Activated naive CD4-positive, alpha-beta T cell treated with anti-CD3 and anti-CD28 coated beads for 36 hours (primary cell): ENCODE measurements at regions of chr11 and their contacts with region 1.

Region 1: GRCh38 chr11:62556108-62556871 is 9.7 kb upstream of the AHNAK start:
- DNase-seq: peak; percentile 93
- H3K4me3 Mint-ChIP-seq: peak overlapping the region; percentile 41
- H3K27ac Mint-ChIP-seq: peak overlapping the region; percentile 96
- H3K4me1 Mint-ChIP-seq: peaks cover 95% of the 10 kb centered on the region
- H3K27me3 Mint-ChIP-seq: no peaks in the 10 kb centered on the region

Region 2: DNA sequence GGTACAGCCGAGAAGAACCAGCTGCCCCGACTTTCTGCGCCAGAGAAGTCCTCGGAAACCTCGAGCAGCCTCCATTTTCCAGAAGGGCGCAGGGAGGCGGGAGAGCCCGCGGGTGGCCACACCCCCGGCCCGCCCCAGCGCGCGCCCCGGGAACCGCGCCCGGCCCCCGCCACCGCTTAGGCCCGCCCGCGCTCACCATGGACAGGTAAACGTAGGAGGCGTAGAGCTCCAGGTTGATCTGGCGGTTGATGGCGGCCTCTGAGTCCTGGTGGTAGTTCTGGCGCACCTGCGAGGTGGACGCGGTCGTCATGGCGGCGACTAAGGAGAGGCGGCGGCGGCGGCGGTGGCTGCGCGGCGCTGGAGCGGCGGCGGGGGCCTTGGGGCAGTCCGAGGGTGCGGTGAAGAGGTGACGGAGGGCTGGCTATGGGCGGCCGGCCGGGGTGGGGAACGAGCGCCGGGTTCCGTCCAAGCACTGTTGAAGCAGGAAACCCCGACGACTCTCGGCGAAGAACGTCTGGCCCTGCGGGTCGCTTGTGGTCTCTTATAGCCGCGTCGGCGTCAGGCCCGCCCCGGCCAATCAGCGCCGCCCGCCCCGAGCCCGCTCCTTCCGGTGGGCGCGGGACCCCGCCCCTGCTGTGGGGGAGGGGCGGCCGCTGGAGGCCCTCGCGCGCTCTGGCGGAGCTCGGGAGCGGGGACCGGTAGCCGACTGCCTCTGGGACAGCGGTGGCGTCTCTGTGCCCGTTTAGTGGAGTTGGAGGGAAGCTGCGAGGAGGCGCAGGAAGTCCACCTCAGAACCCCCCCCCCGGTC is 589.0 kb before region 1 on chr11 and contains the start of gene FTH1:
- CTCF ChIA-PET with region 1: no interaction called
- intact Hi-C with region 1: loop called (anchors 5 kb)
- DNase-seq: peak; percentile 85
- H3K4me3 Mint-ChIP-seq: peak within 1 kb of the TSS; percentile 93
- H3K27ac Mint-ChIP-seq: peak within 1 kb of the TSS; percentile 94
- H3K4me1 Mint-ChIP-seq: peaks cover 67% of the 10 kb centered on the region
- H3K27me3 Mint-ChIP-seq: no peaks in the 10 kb centered on the region
- total RNA-seq, gene FTH1: 1,302 to 1,352 TPM

Region 3: DNA sequence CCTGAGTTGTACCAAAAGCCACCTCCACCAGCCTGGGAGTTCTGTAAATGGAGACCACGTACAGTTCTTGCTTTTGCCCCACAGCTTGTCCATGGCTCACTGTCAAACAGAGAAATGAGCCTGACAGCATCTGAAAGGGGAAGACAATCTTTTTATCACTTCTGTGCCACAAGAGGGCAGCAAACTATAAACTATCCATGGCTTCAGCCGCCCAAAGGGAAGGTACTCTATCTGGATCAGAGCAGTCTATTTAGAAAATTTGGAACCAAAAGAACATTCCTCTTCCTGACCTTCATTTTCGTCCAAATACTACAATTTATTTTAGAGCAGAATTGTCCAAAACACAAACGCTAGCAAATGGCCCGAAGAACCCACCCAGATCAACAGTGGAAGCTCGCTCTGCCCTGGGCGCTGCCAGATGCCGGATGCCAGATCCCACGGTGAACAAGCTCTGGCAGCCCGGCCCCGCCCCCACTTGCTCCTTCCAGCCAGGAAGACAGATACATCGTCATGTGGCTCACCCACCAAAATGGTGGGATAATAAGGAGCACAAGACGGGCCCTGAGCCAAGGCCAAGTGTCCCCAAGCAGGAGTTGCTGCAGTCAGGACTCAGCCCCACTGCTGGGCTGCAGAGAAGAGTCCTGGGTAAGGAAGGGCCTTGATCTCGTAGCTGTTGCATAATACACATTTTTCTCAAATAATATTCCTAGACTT is 161.3 kb before region 1 on chr11:
- CTCF ChIA-PET with region 1: interaction called, 11 read pairs
- intact Hi-C with region 1: no loop called
- DNase-seq: peak; percentile 67
- H3K4me3 Mint-ChIP-seq: no peak overlapping the region
- H3K27ac Mint-ChIP-seq: no peak overlapping the region
- H3K4me1 Mint-ChIP-seq: peaks cover 17% of the 10 kb centered on the region
- H3K27me3 Mint-ChIP-seq: no peaks in the 10 kb centered on the region

Region 4: DNA sequence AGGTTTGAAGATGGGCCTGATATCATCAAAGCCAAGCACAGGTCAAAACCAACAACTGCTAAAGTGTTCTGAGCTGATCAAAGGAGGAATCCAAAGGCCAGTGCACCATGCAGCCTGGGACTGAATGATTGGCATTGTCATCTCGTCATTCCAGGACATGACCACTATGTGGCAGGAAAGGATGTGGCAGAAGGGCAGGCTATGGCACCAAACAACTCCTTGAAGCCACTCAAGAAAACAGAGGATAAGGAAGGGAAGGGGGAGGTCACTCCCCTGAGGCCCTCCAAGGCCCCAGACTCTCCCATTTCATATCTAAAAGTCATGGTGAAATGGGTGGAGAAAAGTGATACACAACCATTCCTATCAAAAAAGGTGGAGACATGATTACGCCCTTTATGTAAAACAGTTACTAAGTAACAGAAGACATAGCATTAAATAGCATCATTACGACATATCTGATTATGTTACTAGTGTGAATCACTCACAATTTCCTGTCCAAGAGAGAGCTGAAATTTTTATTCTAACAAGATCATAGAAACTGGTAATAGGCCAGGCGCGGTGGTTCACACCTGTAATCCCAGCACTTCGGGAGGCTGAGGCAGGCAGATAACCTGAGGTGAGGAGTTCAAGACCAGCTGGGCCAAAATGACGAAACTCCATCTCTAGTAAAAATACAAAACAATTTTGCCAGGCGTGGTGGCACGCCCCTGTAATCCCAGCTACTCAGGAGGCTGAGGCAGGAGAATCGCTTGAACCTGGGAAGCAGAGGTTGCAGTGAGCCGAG is 59.0 kb before region 1 on chr11:
- CTCF ChIA-PET with region 1: interaction called, 4 read pairs
- intact Hi-C with region 1: loop called (anchors 1 kb)
- DNase-seq: peak; percentile 48
- H3K4me3 Mint-ChIP-seq: no peak overlapping the region
- H3K27ac Mint-ChIP-seq: no peak overlapping the region
- H3K4me1 Mint-ChIP-seq: no peaks in the 10 kb centered on the region
- H3K27me3 Mint-ChIP-seq: peaks cover 10% of the 10 kb centered on the region

Region 5: GRCh38 chr11:62567018-62567633 is 10.8 kb after region 1 on chr11:
- CTCF ChIA-PET with region 1: interaction called, 12 read pairs
- intact Hi-C with region 1: no loop called
- DNase-seq: no peak
- H3K4me3 Mint-ChIP-seq: no peak overlapping the region
- H3K27ac Mint-ChIP-seq: peak overlapping the region; percentile 67
- H3K4me1 Mint-ChIP-seq: peaks cover 59% of the 10 kb centered on the region
- H3K27me3 Mint-ChIP-seq: no peaks in the 10 kb centered on the region

Region 6: GRCh38 chr11:62601394-62602140 is 45.3 kb after region 1 on chr11 and contains the start of gene MTA2:
- CTCF ChIA-PET with region 1: interaction called, 4 read pairs
- intact Hi-C with region 1: loop called (anchors 2 kb)
- DNase-seq: peak; percentile 99
- H3K4me3 Mint-ChIP-seq: peak within 1 kb of the TSS; percentile 91
- H3K27ac Mint-ChIP-seq: peak within 1 kb of the TSS; percentile 99
- H3K4me1 Mint-ChIP-seq: peaks cover 45% of the 10 kb centered on the region
- H3K27me3 Mint-ChIP-seq: no peaks in the 10 kb centered on the region
- total RNA-seq, gene MTA2: 191 to 197 TPM